ENCODE measurements at regions of chr4 and their contacts with region 1.

Region 1: DNA sequence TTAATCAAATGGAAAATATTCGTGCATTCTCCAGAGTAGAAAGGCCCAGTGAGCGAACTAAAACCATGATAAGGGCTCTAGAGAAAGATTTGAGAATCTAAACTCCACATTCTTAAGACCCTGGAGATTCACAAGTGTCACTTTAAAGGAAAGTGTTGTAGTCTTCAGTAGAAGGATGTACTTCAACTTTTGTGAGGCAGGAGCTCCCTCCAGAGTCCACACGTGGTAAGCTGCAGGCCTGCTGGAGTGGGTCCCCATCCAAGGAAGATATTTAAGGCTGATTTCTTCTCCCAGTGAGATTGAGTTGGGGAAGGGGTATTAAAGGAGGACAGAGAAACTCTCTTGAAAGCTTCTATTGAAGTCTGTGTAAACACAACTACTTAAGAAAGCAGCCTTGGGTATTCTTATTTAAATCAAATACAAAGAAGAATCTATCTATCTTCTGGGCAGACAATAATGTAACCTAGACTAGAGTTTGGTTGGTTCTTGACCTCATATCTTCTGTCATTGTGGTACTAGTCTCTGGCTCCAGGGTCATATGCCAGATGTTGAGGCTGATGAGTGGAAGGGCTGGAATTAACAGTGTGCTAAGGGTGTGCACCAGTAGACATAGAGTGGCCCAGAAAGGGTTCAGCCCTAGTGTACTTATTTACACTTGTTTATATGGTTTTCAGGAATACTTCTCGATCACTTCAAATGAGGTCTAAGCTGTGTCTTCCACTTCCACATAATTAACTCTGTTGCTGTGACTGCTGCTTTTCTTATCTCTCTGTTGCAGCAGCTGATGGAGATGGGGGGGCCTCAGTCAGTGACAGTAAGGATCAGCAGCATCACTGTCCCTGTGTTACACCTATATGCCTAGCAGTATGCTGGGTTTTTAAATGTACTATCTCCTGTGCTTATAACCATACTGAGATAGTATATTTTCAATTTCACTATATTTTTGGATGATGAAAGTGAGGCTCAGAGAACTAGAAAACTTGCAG is 76.1 kb downstream of the HMGB2 start:
- DNase-seq: peak; percentile 52
- H3K4me3 ChIP-seq: no peak overlapping the region
- H3K27ac ChIP-seq: no peak overlapping the region
- H3K4me1 ChIP-seq: peaks cover 3 to 8% of the 10 kb centered on the region in 2 experiments; a peak in 2 of 4 replicates
- H3K27me3 ChIP-seq: no peaks in the 10 kb centered on the region
- CTCF ChIP-seq: peak; percentile 96
- EP300 ChIP-seq: no peak
- RAD21 ChIP-seq: peak; percentile 98

Region 2: DNA sequence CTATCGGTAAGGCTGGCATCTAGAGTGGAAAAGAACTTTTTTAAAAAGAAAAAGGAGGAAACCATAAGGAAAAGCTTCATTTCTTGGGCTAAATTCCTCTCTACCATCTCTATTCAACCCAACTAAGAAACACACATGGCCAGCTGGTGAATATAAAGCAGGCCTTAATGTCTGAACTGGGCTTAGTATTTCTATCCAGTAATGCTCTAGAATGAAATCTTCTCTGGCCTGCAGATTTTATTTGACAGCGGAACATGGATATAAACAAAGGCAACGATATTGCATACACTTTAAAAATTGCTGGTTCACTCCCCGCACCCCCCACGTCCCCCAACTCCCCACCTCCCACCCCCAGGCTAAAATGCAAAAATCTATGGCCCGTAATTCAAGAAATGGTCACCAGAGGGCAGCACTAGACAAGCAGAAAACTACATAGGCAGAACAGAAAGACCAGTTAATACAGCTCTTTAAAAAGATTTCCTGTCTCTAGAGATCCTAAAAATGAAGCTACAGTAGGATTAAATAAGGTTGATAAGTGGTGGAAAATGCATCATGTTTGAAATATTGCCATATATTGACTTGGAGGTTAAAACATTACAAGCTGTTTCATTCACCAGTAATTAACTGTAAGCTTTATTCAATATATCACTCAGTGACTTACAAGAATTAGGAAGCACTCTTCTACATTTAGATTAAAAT is 244.6 kb before region 1 on chr4:
- CTCF ChIA-PET with region 1: interaction called, 90 read pairs
- POLR2A ChIA-PET with region 1: interaction called, 4 read pairs
- DNase-seq: peak; percentile 58
- H3K4me3 ChIP-seq: no peak overlapping the region; a peak in 1 of 4 replicates
- H3K27ac ChIP-seq: peak overlapping the region in 1 of 2 experiments; percentile 34; a peak in 2 of 4 replicates
- H3K4me1 ChIP-seq: peaks cover 0 to 16% of the 10 kb centered on the region in 2 experiments; a peak in 1 of 4 replicates
- H3K27me3 ChIP-seq: no peaks in the 10 kb centered on the region
- CTCF ChIP-seq: peak; percentile 77
- EP300 ChIP-seq: no peak
- RAD21 ChIP-seq: peak; percentile 81

Region 3: GRCh38 chr4:173025131-173025530 is 232.9 kb before region 1 on chr4:
- CTCF ChIA-PET with region 1: interaction called, 59 read pairs
- POLR2A ChIA-PET with region 1: no interaction called
- DNase-seq: peak; percentile 60
- H3K4me3 ChIP-seq: no peak overlapping the region
- H3K27ac ChIP-seq: no peak overlapping the region
- H3K4me1 ChIP-seq: peaks cover 4 to 12% of the 10 kb centered on the region in 2 experiments; a peak in 3 of 4 replicates
- H3K27me3 ChIP-seq: no peaks in the 10 kb centered on the region
- CTCF ChIP-seq: peak; percentile 80
- EP300 ChIP-seq: no peak
- RAD21 ChIP-seq: peak; percentile 88

Region 4: DNA sequence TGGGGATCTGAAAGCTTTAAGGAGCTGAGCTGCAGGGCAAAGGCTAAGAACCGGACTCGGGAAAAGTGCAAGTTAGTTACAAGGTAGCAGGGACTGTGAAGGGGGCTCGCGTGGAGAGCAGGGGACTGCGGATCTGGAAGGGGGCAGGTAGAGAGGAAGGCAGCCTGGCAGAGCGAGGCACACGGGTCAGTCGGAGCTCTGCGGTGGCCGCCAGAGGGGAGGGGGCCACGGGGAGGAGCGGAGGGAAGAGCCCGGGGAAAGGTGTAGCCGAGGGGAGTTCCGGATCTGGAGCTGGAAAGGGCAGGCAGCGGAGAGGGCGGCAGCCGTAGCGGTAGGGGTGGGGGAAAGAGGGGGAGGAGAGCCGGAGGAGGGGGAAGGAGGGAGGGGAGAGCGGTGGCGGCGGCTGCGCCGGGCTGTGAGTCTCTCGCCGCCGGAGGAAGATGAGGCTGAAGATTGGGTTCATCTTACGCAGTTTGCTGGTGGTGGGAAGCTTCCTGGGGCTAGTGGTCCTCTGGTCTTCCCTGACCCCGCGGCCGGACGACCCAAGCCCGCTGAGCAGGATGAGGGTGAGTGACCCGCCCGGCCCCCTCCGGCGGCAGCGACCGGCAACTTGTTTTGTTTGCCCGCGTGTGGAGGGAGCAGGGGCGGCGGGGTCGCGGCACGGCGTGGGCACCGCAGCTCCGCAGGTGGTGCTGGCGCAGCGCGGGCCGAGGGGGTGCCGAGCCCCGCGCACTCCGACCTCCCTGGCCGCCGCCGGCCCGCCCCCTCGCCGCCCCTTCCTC is 89.4 kb before region 1 on chr4 and contains the start of gene GALNT7:
- CTCF ChIA-PET with region 1: interaction called, 11 read pairs
- POLR2A ChIA-PET with region 1: no interaction called
- DNase-seq: peak; percentile 92
- H3K4me3 ChIP-seq: peak within 1 kb of the TSS; percentile 66 to 99
- H3K27ac ChIP-seq: peak within 1 kb of the TSS; percentile 83 to 96
- H3K4me1 ChIP-seq: peaks cover 10 to 16% of the 10 kb centered on the region in 2 experiments; a peak in 3 of 4 replicates
- H3K27me3 ChIP-seq: no peaks in the 10 kb centered on the region
- CTCF ChIP-seq: no peak
- EP300 ChIP-seq: no peak
- RAD21 ChIP-seq: no peak
- polyA plus RNA-seq, gene GALNT7: 14.8 and 20.0 TPM in 2 replicates

Region 5: DNA sequence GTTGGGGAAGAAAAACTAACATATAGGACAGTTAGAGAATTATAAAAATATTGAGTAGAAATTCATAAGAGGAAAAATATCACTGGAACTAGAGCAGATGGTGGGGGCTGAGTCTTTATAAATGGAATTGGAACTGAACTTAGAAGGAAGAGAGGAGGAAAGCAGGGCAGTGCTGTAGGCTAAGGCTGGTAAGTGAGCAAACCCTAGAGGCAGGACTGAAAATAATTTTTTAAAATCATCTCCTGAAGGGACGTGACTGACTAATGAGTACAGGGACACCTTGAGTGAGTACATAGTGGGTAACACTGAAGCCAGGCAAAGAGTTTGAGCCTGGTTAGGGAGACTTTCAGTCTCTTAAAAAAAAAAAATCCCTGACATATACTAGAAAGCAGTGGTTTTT is 26.1 kb before region 1 on chr4:
- CTCF ChIA-PET with region 1: interaction called, 10 read pairs
- POLR2A ChIA-PET with region 1: no interaction called
- DNase-seq: no peak
- H3K4me3 ChIP-seq: no peak overlapping the region
- H3K27ac ChIP-seq: no peak overlapping the region
- H3K4me1 ChIP-seq: peaks cover 0 to 10% of the 10 kb centered on the region in 2 experiments; a peak in 3 of 4 replicates
- H3K27me3 ChIP-seq: no peaks in the 10 kb centered on the region
- CTCF ChIP-seq: peak; percentile 43
- EP300 ChIP-seq: no peak
- RAD21 ChIP-seq: peak; percentile 49

Region 6: DNA sequence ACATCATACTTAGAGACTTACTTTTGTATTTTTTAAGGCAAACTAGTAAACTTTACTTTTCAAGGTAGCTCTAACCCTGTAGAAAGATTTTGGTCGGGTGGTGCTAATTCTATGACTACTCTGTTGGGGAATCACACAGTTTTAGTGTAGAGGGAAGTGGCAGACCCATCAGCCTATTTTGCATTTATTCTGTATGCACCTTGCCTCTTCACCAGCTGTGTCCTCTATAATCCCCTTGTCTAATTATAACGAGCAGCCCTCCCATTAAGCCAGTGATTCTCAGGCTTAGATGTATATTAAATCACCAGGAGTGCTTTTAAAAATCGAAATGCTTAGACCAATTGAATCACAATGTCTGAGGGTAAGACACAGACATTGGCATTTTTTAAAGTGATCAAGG is 11.3 kb before region 1 on chr4:
- CTCF ChIA-PET with region 1: interaction called, 17 read pairs
- POLR2A ChIA-PET with region 1: no interaction called
- DNase-seq: no peak
- H3K4me3 ChIP-seq: no peak overlapping the region
- H3K27ac ChIP-seq: no peak overlapping the region
- H3K4me1 ChIP-seq: peaks cover 2 to 11% of the 10 kb centered on the region in 2 experiments; a peak in 2 of 4 replicates
- H3K27me3 ChIP-seq: no peaks in the 10 kb centered on the region
- CTCF ChIP-seq: no peak
- EP300 ChIP-seq: no peak
- RAD21 ChIP-seq: no peak

Region 7: GRCh38 chr4:173270312-173271027 is 12.4 kb after region 1 on chr4:
- CTCF ChIA-PET with region 1: interaction called, 16 read pairs
- POLR2A ChIA-PET with region 1: no interaction called
- DNase-seq: peak; percentile 32
- H3K4me3 ChIP-seq: no peak overlapping the region
- H3K27ac ChIP-seq: peak overlapping the region in 1 of 2 experiments; percentile 53; a peak in 2 of 4 replicates
- H3K4me1 ChIP-seq: peaks cover 12 to 15% of the 10 kb centered on the region in 2 experiments; a peak in 3 of 4 replicates
- H3K27me3 ChIP-seq: no peaks in the 10 kb centered on the region
- CTCF ChIP-seq: no peak
- EP300 ChIP-seq: peak in 1 of 2 experiments; percentile 55; a peak in 2 of 4 replicates
- RAD21 ChIP-seq: no peak

Region 8: DNA sequence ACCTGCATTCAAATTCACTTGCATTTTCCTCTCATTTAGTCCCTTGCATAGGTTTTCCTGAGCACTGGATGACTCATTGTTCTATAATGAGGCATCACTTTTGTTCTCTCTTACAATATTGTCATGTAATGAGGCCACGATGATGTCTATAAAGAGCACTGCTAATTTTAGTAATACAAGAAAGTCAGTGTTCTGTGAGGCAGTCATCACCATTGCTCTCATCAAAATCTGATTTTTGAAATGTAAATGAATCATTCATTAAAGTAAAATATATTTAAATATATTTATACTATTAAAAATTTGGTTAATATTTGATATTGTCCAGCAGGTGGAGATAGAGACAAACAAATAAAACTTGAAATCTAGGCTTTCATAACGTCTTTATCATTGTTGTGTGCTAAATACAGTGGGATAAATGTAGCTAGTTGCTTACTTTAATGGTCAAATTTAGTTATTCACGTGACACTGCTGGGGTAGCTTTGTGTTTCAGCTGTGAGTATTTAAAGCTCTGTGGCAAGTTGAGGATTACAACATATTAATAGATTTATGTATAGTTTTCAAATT is 60.7 kb after region 1 on chr4:
- CTCF ChIA-PET with region 1: no interaction called
- POLR2A ChIA-PET with region 1: no interaction called
- DNase-seq: peak; percentile 18
- H3K4me3 ChIP-seq: no peak overlapping the region
- H3K27ac ChIP-seq: peak overlapping the region in 1 of 2 experiments; percentile 37; a peak in 3 of 4 replicates
- H3K4me1 ChIP-seq: peaks cover 0 to 21% of the 10 kb centered on the region in 2 experiments; a peak in 3 of 4 replicates
- H3K27me3 ChIP-seq: no peaks in the 10 kb centered on the region
- CTCF ChIP-seq: peak; percentile 50
- EP300 ChIP-seq: no peak
- RAD21 ChIP-seq: peak; percentile 68

Region 9: DNA sequence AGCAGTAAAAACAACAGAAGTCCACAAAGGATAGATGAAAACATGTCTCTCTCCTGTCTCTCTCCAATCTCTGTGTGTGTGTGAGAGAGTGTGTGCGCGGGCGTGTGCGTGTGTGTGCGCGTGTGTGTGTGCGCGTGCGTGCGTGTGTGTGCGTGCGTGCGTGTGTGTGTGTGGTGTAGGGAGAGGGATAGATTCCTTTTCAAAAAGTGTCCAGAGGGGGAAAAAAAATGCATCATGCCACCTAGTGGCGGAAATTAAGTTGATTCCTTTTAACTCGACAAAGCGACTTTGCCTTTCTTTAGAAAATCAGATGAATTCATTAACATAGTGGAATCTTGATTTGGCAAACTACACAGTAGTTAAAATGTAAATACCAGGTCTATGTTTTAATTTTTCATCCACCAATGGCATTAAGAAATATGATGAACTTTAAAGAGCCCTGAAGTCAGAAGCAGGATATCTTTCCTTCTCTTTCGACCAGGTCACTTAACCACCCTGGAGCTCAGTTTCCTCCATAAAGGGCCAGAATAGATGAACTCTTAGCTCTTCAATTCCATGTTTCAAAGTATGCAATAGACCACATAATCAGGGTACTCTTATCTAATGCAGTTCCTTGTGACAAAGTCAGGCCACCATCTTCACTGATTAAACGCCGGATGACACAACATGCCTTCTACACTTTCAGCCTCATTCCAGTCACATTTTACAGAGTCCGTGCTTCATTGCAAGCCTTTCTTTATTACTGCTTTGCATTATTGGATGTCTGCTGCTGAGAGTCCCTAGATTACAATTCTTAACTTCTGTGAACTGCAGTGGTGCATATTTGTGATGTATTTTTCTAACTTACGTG is 862.6 kb after region 1 on chr4:
- CTCF ChIA-PET with region 1: no interaction called
- POLR2A ChIA-PET with region 1: no interaction called
- DNase-seq: peak; percentile 69
- H3K4me3 ChIP-seq: peak overlapping the region; percentile 40 to 59
- H3K27ac ChIP-seq: peak overlapping the region; percentile 49 to 100; a peak in 3 of 4 replicates
- H3K4me1 ChIP-seq: peaks cover 4 to 11% of the 10 kb centered on the region in 2 experiments; a peak in 2 of 4 replicates
- H3K27me3 ChIP-seq: no peaks in the 10 kb centered on the region
- CTCF ChIP-seq: peak; percentile 72
- EP300 ChIP-seq: peak; percentile 5 to 67; a peak in 1 of 4 replicates
- RAD21 ChIP-seq: peak; percentile 79

Measured in SK-N-SH (cell line).